Calu3 (cell line): ENCODE measurements at regions of chr14 and their contacts with region 1.

Region 1: GRCh38 chr14:101761032-101761880 is at the start of gene PPP2R5C:
- DNase-seq: peak; percentile 88
- H3K4me3 Mint-ChIP-seq: peak within 1 kb of the TSS; percentile 78
- H3K27ac Mint-ChIP-seq: peak within 1 kb of the TSS; percentile 39
- H3K4me1 Mint-ChIP-seq: peaks cover 7% of the 10 kb centered on the region
- H3K27me3 Mint-ChIP-seq: peaks cover 34% of the 10 kb centered on the region
- CTCF ChIP-seq: no peak
- total RNA-seq, gene PPP2R5C: 108 and 120 TPM in 2 replicates

Region 2: DNA sequence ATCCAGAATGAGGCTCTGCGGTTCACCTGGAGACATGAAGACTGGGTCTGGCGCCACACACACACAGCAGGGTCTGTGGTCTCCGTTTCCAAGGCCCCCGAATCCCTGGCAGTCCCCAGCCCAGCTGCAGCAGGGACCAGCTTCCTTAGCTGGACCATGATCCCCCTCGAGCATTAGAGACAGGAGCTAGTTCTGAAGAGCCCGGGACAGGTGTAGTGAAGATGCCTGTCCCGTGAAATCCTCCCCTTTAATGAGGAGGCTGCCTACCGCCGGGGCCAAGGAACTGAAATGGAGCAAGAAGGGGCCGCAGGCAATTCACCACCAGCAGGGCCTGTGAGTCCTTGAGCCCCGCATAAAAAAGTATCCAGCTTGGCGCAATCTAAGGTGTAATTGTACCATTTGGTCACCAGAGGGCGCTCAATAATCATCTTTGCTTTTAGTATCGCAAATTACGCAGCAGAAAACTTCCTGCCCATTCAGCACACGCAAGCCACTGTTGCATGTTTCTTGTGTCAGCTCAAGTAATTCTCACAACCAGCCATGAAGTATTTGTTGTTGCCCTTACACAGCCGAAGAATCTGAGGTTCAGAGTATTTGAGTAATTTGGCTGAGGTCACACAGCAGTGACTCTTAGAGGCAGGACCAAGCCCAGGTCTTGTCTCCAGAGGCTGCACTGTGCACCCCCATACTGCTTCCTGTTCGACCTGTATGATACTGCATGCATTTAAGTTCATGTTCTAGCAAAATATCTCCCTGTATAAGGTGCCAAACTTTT is 54.0 kb before region 1 on chr14:
- CTCF ChIA-PET with region 1: interaction called, 10 read pairs
- intact Hi-C with region 1: no loop called
- DNase-seq: peak; percentile 62
- H3K4me3 Mint-ChIP-seq: no peak overlapping the region
- H3K27ac Mint-ChIP-seq: no peak overlapping the region
- H3K4me1 Mint-ChIP-seq: peaks cover 19% of the 10 kb centered on the region
- H3K27me3 Mint-ChIP-seq: no peaks in the 10 kb centered on the region
- CTCF ChIP-seq: peak; percentile 77

Region 3: GRCh38 chr14:101737414-101738339 is 23.6 kb before region 1 on chr14:
- CTCF ChIA-PET with region 1: no interaction called
- intact Hi-C with region 1: no loop called
- DNase-seq: no peak
- H3K4me3 Mint-ChIP-seq: no peak overlapping the region
- H3K27ac Mint-ChIP-seq: no peak overlapping the region
- H3K4me1 Mint-ChIP-seq: no peaks in the 10 kb centered on the region
- H3K27me3 Mint-ChIP-seq: peaks cover 26% of the 10 kb centered on the region
- CTCF ChIP-seq: no peak